AG04449 (cell line): ENCODE measurements at regions of chr1 and their contacts with region 1.

Region 1: GRCh38 chr1:171801487-171801891 is 20.0 kb downstream of the METTL13 start:
- DNase-seq: no peak
- H3K4me3 ChIP-seq: no peak overlapping the region
- CTCF ChIP-seq: peak; percentile 72

Region 2: DNA sequence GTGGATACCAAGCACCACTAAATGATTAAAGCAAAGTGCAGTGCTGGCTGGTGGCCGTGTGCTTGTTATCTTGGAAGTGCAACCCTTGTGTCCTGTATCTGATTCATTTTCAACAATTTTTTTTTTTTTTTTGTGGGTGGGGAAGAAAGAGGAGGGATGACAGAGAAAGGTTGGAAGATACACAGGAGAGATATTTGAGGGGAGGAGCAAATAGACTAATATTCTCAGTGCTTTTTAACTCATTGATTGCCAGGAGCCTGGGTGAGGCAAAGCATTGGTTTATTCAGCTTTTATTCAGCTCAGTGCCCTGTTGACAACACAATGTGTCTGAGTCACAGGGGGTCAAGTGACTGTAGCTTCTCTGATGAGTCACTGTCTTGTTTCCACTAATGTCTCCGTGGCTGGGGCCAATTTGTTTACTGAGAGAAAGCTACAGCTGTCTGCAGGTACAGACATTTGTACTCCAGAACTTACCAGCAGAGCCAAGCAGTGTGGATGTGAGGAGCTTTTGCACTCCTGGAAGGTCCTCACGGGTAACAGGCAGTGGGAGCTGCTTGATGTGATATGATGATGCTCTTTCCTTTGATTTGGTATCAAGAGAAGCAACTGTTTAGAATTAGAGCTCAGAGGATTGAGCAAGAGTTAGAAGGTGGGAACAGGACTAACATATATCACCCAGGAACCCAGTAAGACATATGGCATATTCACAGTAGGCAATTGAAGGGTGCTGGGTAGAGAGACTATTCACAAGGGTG is 16.2 kb after region 1 on chr1:
- CTCF ChIA-PET with region 1: interaction called, 60 read pairs
- POLR2A ChIA-PET with region 1: no interaction called
- DNase-seq: no peak
- H3K4me3 ChIP-seq: no peak overlapping the region
- CTCF ChIP-seq: no peak

Region 3: DNA sequence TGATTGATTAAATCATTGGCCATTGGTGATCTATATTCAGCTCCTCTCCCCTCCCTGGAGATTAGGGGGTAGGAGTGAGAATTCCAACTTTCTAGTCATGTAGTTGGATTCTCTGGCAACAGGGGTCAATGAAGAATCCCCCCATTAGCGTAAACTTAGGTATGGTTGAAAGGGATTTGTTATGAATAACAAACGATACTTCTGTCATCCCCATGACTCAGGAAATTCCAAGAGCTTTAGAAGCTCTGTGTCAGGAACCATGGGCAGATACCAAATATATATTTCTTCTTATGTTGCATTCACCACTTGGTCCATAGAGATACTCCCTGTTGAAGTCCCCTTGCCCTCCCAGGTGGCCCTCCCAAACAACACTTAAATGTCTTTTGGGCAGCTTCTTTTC is 164.3 kb after region 1 on chr1:
- CTCF ChIA-PET with region 1: interaction called, 14 read pairs
- POLR2A ChIA-PET with region 1: no interaction called
- DNase-seq: no peak
- H3K4me3 ChIP-seq: no peak overlapping the region
- CTCF ChIP-seq: no peak